Activated CD4-positive, alpha-beta T cell treated with anti-CD3 and anti-CD28 coated beads for 36 hours (primary cell): ENCODE measurements at regions of chr3 and their contacts with region 1.

Region 1: GRCh38 chr3:27669591-27669990 is 52.5 kb downstream of the EOMES start:
- DNase-seq: peak; percentile 10
- ATAC-seq: peak; percentile 86
- H3K4me3 Mint-ChIP-seq: no peak overlapping the region
- H3K27ac Mint-ChIP-seq: no peak overlapping the region
- H3K4me1 Mint-ChIP-seq: peaks cover 9% of the 10 kb centered on the region
- H3K27me3 Mint-ChIP-seq: no peaks in the 10 kb centered on the region

Region 2: DNA sequence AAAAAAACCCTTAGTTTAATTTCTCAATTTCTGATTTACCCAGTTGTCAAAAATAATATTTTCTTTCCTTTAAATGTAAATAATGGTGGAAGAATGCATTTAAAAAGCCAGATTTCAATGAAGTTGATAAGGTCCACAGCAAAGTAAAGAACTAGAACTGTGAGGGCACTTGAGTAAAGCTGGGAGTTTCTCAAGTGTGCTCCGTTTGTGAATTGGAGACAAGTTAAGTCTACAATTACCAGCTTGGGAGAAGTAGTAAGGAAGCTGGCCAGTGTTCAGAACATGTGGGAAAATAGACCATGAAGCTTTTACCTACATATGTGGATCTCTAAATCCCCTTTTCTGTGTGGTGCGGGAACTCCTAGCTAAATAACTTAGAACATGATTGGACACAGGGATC is 1640.3 kb before region 1 on chr3:
- CTCF ChIA-PET with region 1: no interaction called
- POLR2A ChIA-PET with region 1: no interaction called
- intact Hi-C with region 1: no loop called
- DNase-seq: no peak
- ATAC-seq: no peak
- H3K4me3 Mint-ChIP-seq: no peak overlapping the region
- H3K27ac Mint-ChIP-seq: no peak overlapping the region
- H3K4me1 Mint-ChIP-seq: no peaks in the 10 kb centered on the region
- H3K27me3 Mint-ChIP-seq: no peaks in the 10 kb centered on the region

Region 3: DNA sequence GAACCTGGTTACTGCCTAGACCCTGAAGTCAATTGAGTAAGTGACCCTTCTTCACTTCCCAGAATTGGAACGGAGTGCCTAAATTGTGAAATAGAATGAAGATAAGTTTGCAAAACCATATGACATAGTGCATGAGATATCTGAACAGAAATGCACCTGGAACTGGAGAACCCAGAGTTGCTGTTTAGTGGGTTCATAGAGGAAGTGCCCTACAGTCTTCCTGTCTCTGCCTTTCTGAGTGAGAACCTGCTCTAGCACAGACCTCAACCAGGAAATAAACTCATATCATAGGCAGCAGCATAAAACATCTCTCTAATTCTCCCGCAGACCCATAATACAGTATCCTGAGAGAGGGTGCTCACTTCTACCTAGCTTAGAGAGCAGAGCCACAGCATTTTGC is 30.3 kb before region 1 on chr3:
- CTCF ChIA-PET with region 1: no interaction called
- POLR2A ChIA-PET with region 1: no interaction called
- intact Hi-C with region 1: loop called in 1 of 2 experiments (anchors 1 kb)
- DNase-seq: no peak
- ATAC-seq: peak; percentile 91
- H3K4me3 Mint-ChIP-seq: no peak overlapping the region
- H3K27ac Mint-ChIP-seq: peak overlapping the region; percentile 82
- H3K4me1 Mint-ChIP-seq: peaks cover 14% of the 10 kb centered on the region
- H3K27me3 Mint-ChIP-seq: no peaks in the 10 kb centered on the region